SK-N-SH (cell line): ENCODE measurements at regions of chr2 and their contacts with region 1.

Region 1: DNA sequence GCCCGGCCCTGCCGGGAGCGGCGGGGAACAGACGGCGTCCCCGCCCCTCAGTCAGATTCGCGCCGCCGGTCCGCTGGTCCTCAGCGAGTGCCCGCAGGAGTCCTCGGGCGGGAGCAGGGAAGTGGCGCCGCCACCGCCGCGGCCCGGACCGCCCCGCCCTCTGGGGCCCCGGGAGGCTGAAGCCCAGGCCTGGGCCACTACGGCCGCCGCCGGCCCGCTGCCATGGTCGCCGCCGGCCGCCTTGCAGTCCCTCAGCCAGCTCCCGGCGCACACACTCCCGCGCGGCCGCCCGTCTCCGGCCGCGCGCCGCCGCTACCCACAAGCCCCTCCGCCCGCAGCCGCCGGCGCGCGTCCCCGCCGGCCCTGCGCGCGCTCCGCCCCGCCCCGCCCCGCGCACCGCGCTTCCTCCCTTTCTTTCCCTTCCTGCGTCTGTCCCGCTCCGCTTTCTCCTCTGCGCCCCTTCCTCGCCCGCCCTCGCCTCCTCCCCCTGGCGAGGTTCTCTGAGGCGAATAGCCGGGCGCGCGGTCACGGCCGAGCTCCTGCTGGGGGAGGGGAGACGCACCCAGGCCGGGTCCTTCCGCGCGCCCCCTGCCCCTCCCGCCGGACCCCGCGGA is at the start of gene ROCK2:
- DNase-seq: peak; percentile 98
- H3K4me3 ChIP-seq: peak within 1 kb of the TSS; percentile 88 to 99
- H3K27ac ChIP-seq: peak within 1 kb of the TSS; percentile 91 to 98
- H3K4me1 ChIP-seq: peaks cover 18 to 25% of the 10 kb centered on the region in 2 experiments
- H3K27me3 ChIP-seq: no peaks in the 10 kb centered on the region
- CTCF ChIP-seq: no peak
- EP300 ChIP-seq: 0 out of 4 replicates have a peak, but pooled peaks of 1 of the 2 experiments have one; percentile 12
- RAD21 ChIP-seq: no peak
- polyA plus RNA-seq, gene ROCK2: 4.2 and 4.9 TPM in 2 replicates

Region 2: DNA sequence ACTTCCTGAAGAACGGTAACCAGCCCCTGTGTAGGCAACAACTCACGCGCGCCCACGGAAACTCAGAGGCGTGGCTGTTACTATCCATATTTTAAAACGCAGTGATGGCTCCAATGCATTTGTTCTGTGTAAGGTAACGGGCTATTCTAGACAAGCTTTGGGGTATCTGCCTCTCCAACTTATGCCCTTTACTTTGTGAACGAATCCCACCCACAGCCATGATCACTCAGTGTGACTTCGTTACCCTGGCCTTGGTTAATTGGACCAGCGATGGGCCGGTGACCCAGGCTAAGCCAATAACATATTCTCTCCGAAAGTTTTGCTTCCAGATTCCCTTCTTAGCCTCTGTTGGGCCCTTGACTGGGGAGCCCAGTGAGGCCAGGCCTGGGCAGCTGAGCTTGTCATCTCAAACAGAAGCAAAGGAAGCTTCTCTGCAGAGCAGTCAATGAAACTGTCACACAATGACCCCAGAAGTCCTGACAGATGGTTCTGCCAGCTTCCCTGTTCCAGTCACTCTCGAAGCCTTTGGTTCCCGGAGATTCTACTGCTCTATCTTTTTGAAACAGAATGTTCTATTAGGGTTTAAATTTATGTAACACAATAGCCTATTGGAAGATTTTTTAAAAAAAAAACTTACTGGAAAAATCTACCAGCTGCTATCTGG is 30.7 kb after region 1 on chr2:
- CTCF ChIA-PET with region 1: interaction called, 10 read pairs
- POLR2A ChIA-PET with region 1: interaction called, 3 read pairs
- DNase-seq: no peak
- H3K4me3 ChIP-seq: no peak overlapping the region
- H3K27ac ChIP-seq: peak overlapping the region; percentile 73 to 90; a peak in 3 of 4 replicates
- H3K4me1 ChIP-seq: peaks cover 14 to 27% of the 10 kb centered on the region in 2 experiments; a peak in 3 of 4 replicates
- H3K27me3 ChIP-seq: no peaks in the 10 kb centered on the region
- CTCF ChIP-seq: no peak
- EP300 ChIP-seq: no peak
- RAD21 ChIP-seq: no peak

Region 3: GRCh38 chr2:11592671-11593574 is 248.5 kb after region 1 on chr2:
- CTCF ChIA-PET with region 1: no interaction called
- POLR2A ChIA-PET with region 1: no interaction called
- DNase-seq: no peak
- H3K4me3 ChIP-seq: no peak overlapping the region
- H3K27ac ChIP-seq: no peak overlapping the region
- H3K4me1 ChIP-seq: peaks cover 0 to 6% of the 10 kb centered on the region in 2 experiments; a peak in 1 of 4 replicates
- H3K27me3 ChIP-seq: no peaks in the 10 kb centered on the region
- CTCF ChIP-seq: no peak
- EP300 ChIP-seq: no peak
- RAD21 ChIP-seq: no peak